Ovary (tissue), 10 donors: ENCODE measurements at regions of chr3 and their contacts with region 1.

Region 1: DNA sequence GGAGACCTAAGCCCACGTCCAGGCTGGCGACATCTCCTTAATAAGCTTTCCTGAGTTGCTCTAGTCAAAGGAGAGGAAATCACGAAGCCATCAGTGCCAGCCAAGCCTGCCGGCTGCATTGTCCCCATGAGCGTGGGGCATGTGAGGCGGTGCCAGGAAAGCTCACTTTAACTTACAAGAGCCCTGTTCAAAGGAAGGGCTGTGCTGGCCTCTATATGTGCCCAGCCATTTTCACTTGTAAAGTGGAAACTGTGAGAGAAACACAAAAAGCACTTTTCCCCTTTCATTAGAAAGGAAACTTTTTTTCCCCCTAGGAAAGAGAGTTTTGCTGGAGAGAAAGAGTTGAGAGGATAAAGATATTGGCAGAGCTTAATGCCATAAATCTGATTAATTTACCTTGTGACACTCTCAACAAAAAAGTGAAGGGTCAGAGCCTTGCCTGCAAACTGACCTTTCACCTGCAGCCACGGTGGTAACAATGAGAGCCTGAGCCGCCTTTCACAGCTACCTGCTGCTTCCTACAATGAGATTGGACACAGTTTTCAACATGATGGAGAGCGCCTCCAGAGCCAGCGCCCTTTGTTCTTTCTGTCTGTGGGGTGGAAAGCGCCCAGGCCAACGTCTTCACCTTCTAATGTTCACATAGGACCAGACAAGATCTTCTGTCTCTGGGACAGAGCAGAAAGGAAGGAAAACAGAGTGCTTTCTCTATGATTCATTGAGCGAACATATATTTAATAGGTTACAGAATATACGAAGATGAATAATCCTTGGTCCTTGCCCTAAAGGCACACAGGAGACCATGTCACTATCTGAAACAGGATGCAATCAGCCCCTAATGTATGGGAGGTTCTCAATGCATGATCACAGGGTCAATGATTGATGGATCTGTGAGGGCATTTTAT is 233.1 kb upstream of the HES1 start:
- DNase-seq: no peak
- H3K4me3 ChIP-seq: no peak overlapping the region
- H3K27ac ChIP-seq: no peak overlapping the region
- H3K4me1 ChIP-seq: peaks cover 14% of the 10 kb centered on the region
- H3K27me3 ChIP-seq: no peaks in the 10 kb centered on the region
- CTCF ChIP-seq: no peak
- EP300 ChIP-seq: no peak
- POLR2A ChIP-seq: no peak

Region 2: GRCh38 chr3:193655831-193656433 is 246.9 kb before region 1 on chr3:
- intact Hi-C with region 1: no loop called
- DNase-seq: no peak
- H3K4me3 ChIP-seq: no peak overlapping the region
- H3K27ac ChIP-seq: no peak overlapping the region
- H3K4me1 ChIP-seq: no peaks in the 10 kb centered on the region
- H3K27me3 ChIP-seq: no peaks in the 10 kb centered on the region
- CTCF ChIP-seq: no peak
- EP300 ChIP-seq: no peak
- POLR2A ChIP-seq: no peak

Region 3: GRCh38 chr3:193960487-193961274 is 57.8 kb after region 1 on chr3:
- intact Hi-C with region 1: no loop called
- DNase-seq: no peak
- H3K4me3 ChIP-seq: no peak overlapping the region
- H3K27ac ChIP-seq: no peak overlapping the region
- H3K4me1 ChIP-seq: no peaks in the 10 kb centered on the region
- H3K27me3 ChIP-seq: no peaks in the 10 kb centered on the region
- CTCF ChIP-seq: no peak
- EP300 ChIP-seq: no peak
- POLR2A ChIP-seq: no peak

Region 4: DNA sequence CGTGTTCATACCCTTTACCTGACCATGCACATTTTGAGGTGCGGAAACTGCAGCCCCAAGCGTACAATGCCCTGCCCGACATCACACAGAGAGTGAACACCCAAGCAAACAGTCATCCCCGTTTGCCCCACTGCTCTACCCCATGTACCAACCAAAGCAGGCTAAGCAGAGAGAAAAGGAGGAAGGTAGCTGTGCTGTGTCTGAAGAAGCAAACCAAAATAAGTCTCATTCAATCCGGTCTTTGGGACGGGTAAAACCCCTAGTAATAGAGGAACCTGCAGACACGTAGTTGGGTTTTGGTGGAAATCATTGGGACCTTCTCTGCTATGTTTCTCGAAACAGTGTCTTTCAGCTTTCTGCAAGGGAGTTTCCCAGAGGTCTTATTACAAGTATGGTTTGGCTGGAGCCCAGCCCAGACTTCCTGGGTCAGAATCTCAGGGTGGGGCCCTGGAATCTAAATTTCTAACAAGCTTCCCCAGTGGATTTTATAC is 68.4 kb after region 1 on chr3:
- intact Hi-C with region 1: loop called in 1 of 4 experiments (anchors 2 kb)
- DNase-seq: no peak
- H3K4me3 ChIP-seq: no peak overlapping the region
- H3K27ac ChIP-seq: no peak overlapping the region
- H3K4me1 ChIP-seq: no peaks in the 10 kb centered on the region
- H3K27me3 ChIP-seq: no peaks in the 10 kb centered on the region
- CTCF ChIP-seq: no peak
- EP300 ChIP-seq: no peak
- POLR2A ChIP-seq: no peak